Calu3 (cell line): ENCODE measurements at regions of chr22 and their contacts with region 1.

Region 1: GRCh38 chr22:46150034-46150654 is at the start of gene PPARA:
- DNase-seq: peak; percentile 93
- H3K4me3 Mint-ChIP-seq: peak within 1 kb of the TSS; percentile 81
- H3K27ac Mint-ChIP-seq: peak within 1 kb of the TSS; percentile 43
- H3K4me1 Mint-ChIP-seq: no peaks in the 10 kb centered on the region
- H3K27me3 Mint-ChIP-seq: peaks cover 43% of the 10 kb centered on the region
- CTCF ChIP-seq: no peak
- total RNA-seq, gene PPARA: 22.7 and 31.5 TPM in 2 replicates

Region 2: GRCh38 chr22:45828841-45829240 is 321.3 kb before region 1 on chr22:
- CTCF ChIA-PET with region 1: no interaction called
- intact Hi-C with region 1: no loop called
- DNase-seq: no peak
- H3K4me3 Mint-ChIP-seq: no peak overlapping the region
- H3K27ac Mint-ChIP-seq: no peak overlapping the region
- H3K4me1 Mint-ChIP-seq: peaks cover 22% of the 10 kb centered on the region
- H3K27me3 Mint-ChIP-seq: no peaks in the 10 kb centered on the region
- CTCF ChIP-seq: no peak

Region 3: GRCh38 chr22:46042786-46043185 is 107.4 kb before region 1 on chr22:
- CTCF ChIA-PET with region 1: interaction called, 11 read pairs
- intact Hi-C with region 1: no loop called
- DNase-seq: no peak
- H3K4me3 Mint-ChIP-seq: no peak overlapping the region
- H3K27ac Mint-ChIP-seq: no peak overlapping the region
- H3K4me1 Mint-ChIP-seq: no peaks in the 10 kb centered on the region
- H3K27me3 Mint-ChIP-seq: no peaks in the 10 kb centered on the region
- CTCF ChIP-seq: no peak

Region 4: GRCh38 chr22:46131151-46131587 is 19.0 kb before region 1 on chr22:
- CTCF ChIA-PET with region 1: no interaction called
- intact Hi-C with region 1: no loop called
- DNase-seq: no peak
- H3K4me3 Mint-ChIP-seq: no peak overlapping the region
- H3K27ac Mint-ChIP-seq: no peak overlapping the region
- H3K4me1 Mint-ChIP-seq: peaks cover 6% of the 10 kb centered on the region
- H3K27me3 Mint-ChIP-seq: no peaks in the 10 kb centered on the region
- CTCF ChIP-seq: peak; percentile 47

Region 5: DNA sequence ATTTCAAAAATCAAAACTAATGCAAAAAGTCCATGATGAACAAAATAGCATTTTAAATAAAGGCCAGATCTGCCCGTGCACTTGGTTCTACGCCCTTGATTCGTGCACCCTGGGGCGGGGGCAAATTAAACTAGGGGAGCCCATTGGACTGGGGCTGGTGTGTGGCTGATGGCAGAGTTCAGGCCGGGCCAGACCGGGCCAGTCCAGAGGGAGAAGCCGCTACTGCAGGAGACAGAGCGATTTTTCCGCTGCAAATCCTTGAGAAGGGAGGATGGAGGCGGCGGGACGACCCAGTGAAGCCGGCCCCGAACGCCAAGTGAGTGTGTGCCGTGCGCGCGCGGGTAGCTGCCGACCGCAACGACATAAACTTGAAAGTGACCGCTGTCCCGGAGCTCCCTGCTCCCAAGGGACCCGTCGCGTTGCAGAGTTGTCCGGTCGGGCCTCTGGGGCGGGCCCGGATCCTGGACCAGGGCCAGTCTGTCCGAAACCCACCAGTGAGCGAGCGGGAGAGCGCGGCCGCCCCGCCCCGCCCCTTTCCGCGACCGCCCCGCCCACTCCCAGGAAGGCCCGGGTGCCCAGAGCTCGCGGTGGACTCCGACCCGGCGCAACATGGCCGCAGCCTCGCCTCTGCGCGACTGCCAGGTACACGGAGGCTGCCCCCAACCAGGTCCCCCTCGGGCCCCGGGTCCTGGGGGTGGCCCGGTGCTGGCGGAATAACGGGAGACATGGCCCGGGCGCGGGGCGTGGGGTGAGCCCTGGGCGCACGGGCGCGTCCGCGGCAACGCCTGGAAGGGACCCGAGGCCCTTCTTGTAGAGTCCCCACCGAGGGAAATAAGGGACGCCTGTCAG is 117.5 kb after region 1 on chr22 and contains the start of gene TTC38:
- CTCF ChIA-PET with region 1: interaction called, 3 read pairs
- intact Hi-C with region 1: loop called (anchors 10 kb)
- DNase-seq: peak; percentile 90
- H3K4me3 Mint-ChIP-seq: peak within 1 kb of the TSS; percentile 93
- H3K27ac Mint-ChIP-seq: peak within 1 kb of the TSS; percentile 63
- H3K4me1 Mint-ChIP-seq: peaks cover 23% of the 10 kb centered on the region
- H3K27me3 Mint-ChIP-seq: no peaks in the 10 kb centered on the region
- CTCF ChIP-seq: no peak
- total RNA-seq, gene TTC38: 31.9 and 34.0 TPM in 2 replicates